Activated CD4-positive, alpha-beta T cell treated with anti-CD3 and anti-CD28 coated beads for 36 hours (primary cell): ENCODE measurements at regions of chr14 and their contacts with region 1.

Region 1: GRCh38 chr14:32070282-32070681 is 6.8 kb upstream of the ARHGAP5 start:
- DNase-seq: no peak
- ATAC-seq: no peak
- H3K4me3 Mint-ChIP-seq: no peak overlapping the region
- H3K27ac Mint-ChIP-seq: no peak overlapping the region
- H3K4me1 Mint-ChIP-seq: no peaks in the 10 kb centered on the region
- H3K27me3 Mint-ChIP-seq: peaks cover 4% of the 10 kb centered on the region

Region 2: GRCh38 chr14:32028599-32028998 is 41.7 kb before region 1 on chr14:
- CTCF ChIA-PET with region 1: no interaction called
- POLR2A ChIA-PET with region 1: no interaction called
- intact Hi-C with region 1: no loop called
- DNase-seq: no peak
- ATAC-seq: no peak
- H3K4me3 Mint-ChIP-seq: no peak overlapping the region
- H3K27ac Mint-ChIP-seq: no peak overlapping the region
- H3K4me1 Mint-ChIP-seq: no peaks in the 10 kb centered on the region
- H3K27me3 Mint-ChIP-seq: peaks cover 6% of the 10 kb centered on the region

Region 3: DNA sequence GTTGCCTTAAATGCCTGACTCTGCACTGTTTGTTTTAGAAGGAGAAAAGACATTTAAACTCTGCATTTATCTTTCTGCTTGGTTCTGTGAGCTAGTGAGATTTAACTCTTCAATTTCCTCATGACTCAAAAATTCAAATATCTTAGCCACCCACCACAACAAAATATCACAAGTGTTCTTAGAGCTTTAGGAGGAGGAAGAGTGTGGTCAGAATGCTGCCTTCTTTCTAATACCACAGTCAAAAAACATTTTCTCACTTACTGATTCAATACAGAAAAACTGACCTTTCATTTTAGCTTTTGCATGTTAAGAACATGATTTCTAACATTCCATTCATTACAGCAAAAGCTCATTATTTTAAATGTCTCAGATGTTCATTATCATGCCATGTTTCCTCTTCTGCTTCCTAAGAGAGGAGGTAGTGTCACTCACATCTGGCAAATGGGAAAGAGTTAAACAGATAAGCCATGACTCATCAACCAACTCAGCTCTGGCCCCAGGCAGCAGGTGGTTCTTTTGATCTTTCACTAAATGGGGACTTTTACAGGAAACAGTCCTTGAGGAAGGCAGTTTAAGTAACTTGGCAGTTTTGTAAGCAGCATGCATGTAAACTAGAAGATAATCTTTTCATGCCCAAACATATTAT is 189.2 kb after region 1 on chr14:
- CTCF ChIA-PET with region 1: interaction called, 81 read pairs
- POLR2A ChIA-PET with region 1: interaction called, 4 read pairs
- intact Hi-C with region 1: no loop called
- DNase-seq: peak; percentile 29
- ATAC-seq: peak; percentile 80
- H3K4me3 Mint-ChIP-seq: no peak overlapping the region
- H3K27ac Mint-ChIP-seq: peak overlapping the region; percentile 28
- H3K4me1 Mint-ChIP-seq: peaks cover 11% of the 10 kb centered on the region
- H3K27me3 Mint-ChIP-seq: peaks cover 3% of the 10 kb centered on the region